CD4-positive, alpha-beta T cell (primary cell): ENCODE measurements at regions of chr17 and their contacts with region 1.

Region 1: GRCh38 chr17:27892866-27893769 is at the start of gene LYRM9:
- DNase-seq: peak; percentile 85 to 97 (median 93)
- ATAC-seq: peak; percentile 98
- H3K4me3 ChIP-seq: peak within 1 kb of the TSS; percentile 73
- H3K4me3 Mint-ChIP-seq: peak within 1 kb of the TSS; percentile 90
- H3K27ac ChIP-seq: no peak within 1 kb of the TSS
- H3K27ac Mint-ChIP-seq: peak within 1 kb of the TSS; percentile 58
- H3K4me1 ChIP-seq: peaks cover 16% of the 10 kb centered on the region
- H3K4me1 Mint-ChIP-seq: peaks cover 27% of the 10 kb centered on the region
- H3K27me3 ChIP-seq: peaks cover 0 to 7% of the 10 kb centered on the region in 2 experiments
- H3K27me3 Mint-ChIP-seq: peaks cover 31% of the 10 kb centered on the region
- CTCF ChIP-seq: peak; percentile 82
- total RNA-seq, gene LYRM9: 13.0 to 15.7 TPM

Region 2: GRCh38 chr17:27660426-27660825 is 232.7 kb before region 1 on chr17:
- CTCF ChIA-PET with region 1: no interaction called
- POLR2A ChIA-PET with region 1: no interaction called
- intact Hi-C with region 1: loop called in 1 of 2 experiments (anchors 5 kb)
- DNase-seq: no peak
- ATAC-seq: no peak
- H3K4me3 ChIP-seq: no peak overlapping the region
- H3K4me3 Mint-ChIP-seq: no peak overlapping the region
- H3K27ac ChIP-seq: no peak overlapping the region
- H3K27ac Mint-ChIP-seq: no peak overlapping the region
- H3K4me1 ChIP-seq: no peaks in the 10 kb centered on the region
- H3K4me1 Mint-ChIP-seq: no peaks in the 10 kb centered on the region
- H3K27me3 ChIP-seq: no peaks in the 10 kb centered on the region
- H3K27me3 Mint-ChIP-seq: no peaks in the 10 kb centered on the region
- CTCF ChIP-seq: no peak

Region 3: GRCh38 chr17:27741361-27741861 is 151.7 kb before region 1 on chr17:
- CTCF ChIA-PET with region 1: no interaction called
- POLR2A ChIA-PET with region 1: no interaction called
- intact Hi-C with region 1: no loop called
- DNase-seq: no peak
- ATAC-seq: no peak
- H3K4me3 ChIP-seq: no peak overlapping the region
- H3K4me3 Mint-ChIP-seq: no peak overlapping the region
- H3K27ac ChIP-seq: no peak overlapping the region
- H3K27ac Mint-ChIP-seq: no peak overlapping the region
- H3K4me1 ChIP-seq: no peaks in the 10 kb centered on the region
- H3K4me1 Mint-ChIP-seq: no peaks in the 10 kb centered on the region
- H3K27me3 ChIP-seq: no peaks in the 10 kb centered on the region
- H3K27me3 Mint-ChIP-seq: no peaks in the 10 kb centered on the region
- CTCF ChIP-seq: no peak

Region 4: DNA sequence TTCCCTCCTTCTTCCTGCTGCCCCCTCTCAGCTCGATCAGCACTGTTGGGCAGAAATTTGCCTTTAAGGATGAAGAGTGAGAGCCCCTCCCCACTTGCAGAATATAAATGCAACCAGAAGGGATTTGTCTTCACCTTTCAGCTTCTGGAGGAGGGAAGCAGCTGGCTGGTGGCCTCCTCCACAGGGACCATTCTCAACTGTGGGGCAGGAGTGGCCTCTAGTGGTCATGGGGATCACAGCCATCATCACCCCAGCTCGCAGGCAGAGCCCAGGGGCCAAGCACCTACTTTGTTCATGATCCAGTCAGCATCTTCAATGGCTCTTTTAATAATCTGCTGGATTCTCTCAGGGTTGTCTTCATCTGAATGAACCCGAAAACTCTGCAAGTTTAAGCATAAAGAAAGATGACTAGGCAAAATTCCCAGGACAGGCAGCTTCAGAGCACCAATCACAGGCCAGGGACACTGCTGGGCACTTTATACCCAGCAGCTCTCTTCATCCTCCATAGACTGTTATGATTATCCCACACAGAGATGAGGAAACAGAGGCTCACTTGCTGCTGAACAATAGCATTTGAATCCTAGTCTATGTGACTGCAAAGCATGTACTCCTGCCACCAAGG is 13.0 kb before region 1 on chr17:
- CTCF ChIA-PET with region 1: interaction called, 21 read pairs
- POLR2A ChIA-PET with region 1: interaction called, 7 read pairs
- intact Hi-C with region 1: no loop called
- DNase-seq: peak; percentile 28 to 77 (median 55)
- ATAC-seq: peak; percentile 73
- H3K4me3 ChIP-seq: no peak overlapping the region
- H3K4me3 Mint-ChIP-seq: no peak overlapping the region
- H3K27ac ChIP-seq: no peak overlapping the region
- H3K27ac Mint-ChIP-seq: no peak overlapping the region
- H3K4me1 ChIP-seq: peaks cover 18% of the 10 kb centered on the region
- H3K4me1 Mint-ChIP-seq: peaks cover 22% of the 10 kb centered on the region
- H3K27me3 ChIP-seq: no peaks in the 10 kb centered on the region
- H3K27me3 Mint-ChIP-seq: no peaks in the 10 kb centered on the region
- CTCF ChIP-seq: peak; percentile 66

Region 5: GRCh38 chr17:28041068-28041843 is 148.1 kb after region 1 on chr17:
- CTCF ChIA-PET with region 1: interaction called, 7 read pairs
- POLR2A ChIA-PET with region 1: interaction called, 7 read pairs
- intact Hi-C with region 1: loop called (anchors 2 kb)
- DNase-seq: peak; percentile 97 to 100 (median 99)
- ATAC-seq: peak; percentile 92
- H3K4me3 ChIP-seq: peak overlapping the region; percentile 84
- H3K4me3 Mint-ChIP-seq: peak overlapping the region; percentile 93
- H3K27ac ChIP-seq: peak overlapping the region; percentile 52 to 69
- H3K27ac Mint-ChIP-seq: peak overlapping the region; percentile 82
- H3K4me1 ChIP-seq: peaks cover 30% of the 10 kb centered on the region
- H3K4me1 Mint-ChIP-seq: peaks cover 57% of the 10 kb centered on the region
- H3K27me3 ChIP-seq: no peaks in the 10 kb centered on the region
- H3K27me3 Mint-ChIP-seq: no peaks in the 10 kb centered on the region
- CTCF ChIP-seq: no peak

Region 6: DNA sequence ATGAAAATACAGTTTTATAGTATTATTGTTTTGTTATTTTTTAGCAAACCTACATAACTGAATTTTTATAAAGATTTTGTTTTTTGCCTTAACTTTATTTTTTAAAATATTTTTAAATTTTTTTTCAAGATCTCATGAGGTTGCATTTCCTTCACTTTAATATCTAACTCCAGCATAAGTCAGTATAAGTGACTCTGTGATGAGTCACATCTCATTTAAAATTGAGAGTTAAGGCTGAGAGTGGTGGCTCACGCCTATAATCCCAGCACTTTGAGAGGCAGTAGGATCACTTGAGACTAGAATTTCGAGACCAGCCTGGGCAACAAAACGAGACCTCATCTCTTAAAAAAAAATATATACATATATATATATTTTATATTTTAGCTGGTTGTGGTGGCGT is 193.4 kb after region 1 on chr17:
- CTCF ChIA-PET with region 1: no interaction called
- POLR2A ChIA-PET with region 1: no interaction called
- intact Hi-C with region 1: no loop called
- DNase-seq: no peak
- ATAC-seq: no peak
- H3K4me3 ChIP-seq: no peak overlapping the region
- H3K4me3 Mint-ChIP-seq: no peak overlapping the region
- H3K27ac ChIP-seq: no peak overlapping the region
- H3K27ac Mint-ChIP-seq: no peak overlapping the region
- H3K4me1 ChIP-seq: no peaks in the 10 kb centered on the region
- H3K4me1 Mint-ChIP-seq: peaks cover 55% of the 10 kb centered on the region
- H3K27me3 ChIP-seq: no peaks in the 10 kb centered on the region
- H3K27me3 Mint-ChIP-seq: no peaks in the 10 kb centered on the region
- CTCF ChIP-seq: no peak

Region 7: DNA sequence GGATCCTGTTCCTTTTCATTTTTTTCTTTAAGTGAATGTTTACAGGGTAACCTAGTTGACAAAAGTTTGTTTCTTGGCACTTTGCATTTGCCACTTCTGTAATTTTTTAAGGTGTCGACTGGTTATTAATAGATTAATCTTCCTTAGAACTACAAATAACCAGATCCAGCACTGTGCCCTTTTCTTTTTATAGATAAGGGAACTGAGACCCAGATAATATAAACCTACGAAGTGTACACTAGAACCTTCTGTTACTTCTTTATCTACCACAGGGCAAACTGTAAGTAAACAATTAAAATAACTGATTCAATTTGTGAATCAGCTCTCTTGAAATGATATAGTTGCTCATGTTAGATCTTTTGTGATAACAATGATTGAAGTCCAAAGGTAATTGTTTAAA is 204.8 kb after region 1 on chr17:
- CTCF ChIA-PET with region 1: no interaction called
- POLR2A ChIA-PET with region 1: no interaction called
- intact Hi-C with region 1: no loop called
- DNase-seq: no peak
- ATAC-seq: no peak
- H3K4me3 ChIP-seq: no peak overlapping the region
- H3K4me3 Mint-ChIP-seq: no peak overlapping the region
- H3K27ac ChIP-seq: no peak overlapping the region
- H3K27ac Mint-ChIP-seq: no peak overlapping the region
- H3K4me1 ChIP-seq: no peaks in the 10 kb centered on the region
- H3K4me1 Mint-ChIP-seq: no peaks in the 10 kb centered on the region
- H3K27me3 ChIP-seq: no peaks in the 10 kb centered on the region
- H3K27me3 Mint-ChIP-seq: no peaks in the 10 kb centered on the region
- CTCF ChIP-seq: no peak

Region 8: DNA sequence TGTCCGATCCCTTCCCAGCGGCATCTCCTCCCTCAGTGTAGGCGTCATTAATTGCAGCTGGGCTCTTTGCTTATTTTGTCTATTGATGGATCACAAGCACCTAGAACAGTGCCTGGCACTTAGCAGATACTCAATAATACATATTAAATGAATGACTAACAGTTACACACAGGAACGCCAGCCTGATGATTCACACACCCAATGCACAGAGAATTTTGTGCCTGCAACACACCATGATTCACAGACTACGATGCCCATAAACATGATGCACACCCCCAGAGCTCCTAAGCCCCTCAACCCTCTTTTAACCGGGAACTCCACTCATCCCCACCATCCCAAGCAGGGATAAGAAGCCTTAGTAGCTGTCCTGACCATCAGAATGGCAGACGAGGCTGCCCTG is 359.3 kb after region 1 on chr17:
- CTCF ChIA-PET with region 1: no interaction called
- POLR2A ChIA-PET with region 1: interaction called, 3 read pairs
- intact Hi-C with region 1: loop called (anchors 2 to 5 kb)
- DNase-seq: no peak
- ATAC-seq: no peak
- H3K4me3 ChIP-seq: no peak overlapping the region
- H3K4me3 Mint-ChIP-seq: no peak overlapping the region
- H3K27ac ChIP-seq: no peak overlapping the region
- H3K27ac Mint-ChIP-seq: no peak overlapping the region
- H3K4me1 ChIP-seq: peaks cover 12% of the 10 kb centered on the region
- H3K4me1 Mint-ChIP-seq: peaks cover 8% of the 10 kb centered on the region
- H3K27me3 ChIP-seq: peaks cover 15 to 29% of the 10 kb centered on the region in 2 experiments
- H3K27me3 Mint-ChIP-seq: peaks cover 49% of the 10 kb centered on the region
- CTCF ChIP-seq: no peak